ENCODE measurements at regions of chr14 and their contacts with region 1.

Region 1: DNA sequence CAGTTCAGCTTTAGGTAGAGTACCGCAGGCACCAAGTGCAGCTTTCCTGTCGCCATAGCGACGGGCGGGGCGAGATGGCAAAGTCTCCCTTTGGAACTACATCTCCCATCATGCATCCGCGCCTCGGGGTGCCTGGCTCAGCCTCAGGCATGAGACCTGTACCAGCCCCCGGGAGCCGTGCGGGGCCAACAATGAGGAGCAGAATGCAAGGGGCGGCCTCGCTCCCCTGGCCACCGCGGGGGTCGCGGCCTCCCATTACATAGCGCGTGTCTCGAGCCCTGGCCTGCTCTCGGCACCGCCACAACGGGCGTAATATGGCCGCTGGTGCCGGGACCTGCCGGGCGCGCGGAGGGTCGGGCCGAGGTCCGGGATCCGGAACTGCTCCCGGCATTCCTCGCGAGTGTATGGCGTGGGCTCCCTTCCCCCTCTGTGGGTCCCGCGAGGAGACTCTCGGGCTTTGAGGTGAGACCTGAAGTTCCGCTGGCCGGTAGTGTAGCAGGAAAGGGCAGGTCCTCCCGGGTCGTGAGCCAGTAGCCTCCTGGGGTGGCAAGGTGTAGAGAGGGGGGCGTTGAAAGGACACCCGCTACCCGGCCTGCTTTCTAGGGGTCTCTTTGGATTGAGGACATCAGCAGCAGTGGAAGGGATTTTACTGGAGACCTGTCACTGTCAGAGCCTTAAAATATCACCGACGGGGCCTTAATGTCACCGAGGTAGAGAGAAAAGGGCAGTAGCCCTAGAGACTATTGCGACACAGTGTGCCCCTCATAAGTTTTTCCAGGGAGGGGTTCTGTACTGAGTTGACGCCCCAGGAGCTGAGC is at the start of gene THTPA:
- DNase-seq: peak; percentile 88
- ATAC-seq: peak; percentile 79
- H3K4me3 Mint-ChIP-seq: peak within 1 kb of the TSS; percentile 94
- H3K27ac Mint-ChIP-seq: peak within 1 kb of the TSS; percentile 95
- H3K4me1 Mint-ChIP-seq: peaks cover 30% of the 10 kb centered on the region
- H3K27me3 Mint-ChIP-seq: no peaks in the 10 kb centered on the region
- CTCF ChIP-seq: no peak
- total RNA-seq, gene THTPA: 18.0 and 18.6 TPM in 2 replicates

Region 2: DNA sequence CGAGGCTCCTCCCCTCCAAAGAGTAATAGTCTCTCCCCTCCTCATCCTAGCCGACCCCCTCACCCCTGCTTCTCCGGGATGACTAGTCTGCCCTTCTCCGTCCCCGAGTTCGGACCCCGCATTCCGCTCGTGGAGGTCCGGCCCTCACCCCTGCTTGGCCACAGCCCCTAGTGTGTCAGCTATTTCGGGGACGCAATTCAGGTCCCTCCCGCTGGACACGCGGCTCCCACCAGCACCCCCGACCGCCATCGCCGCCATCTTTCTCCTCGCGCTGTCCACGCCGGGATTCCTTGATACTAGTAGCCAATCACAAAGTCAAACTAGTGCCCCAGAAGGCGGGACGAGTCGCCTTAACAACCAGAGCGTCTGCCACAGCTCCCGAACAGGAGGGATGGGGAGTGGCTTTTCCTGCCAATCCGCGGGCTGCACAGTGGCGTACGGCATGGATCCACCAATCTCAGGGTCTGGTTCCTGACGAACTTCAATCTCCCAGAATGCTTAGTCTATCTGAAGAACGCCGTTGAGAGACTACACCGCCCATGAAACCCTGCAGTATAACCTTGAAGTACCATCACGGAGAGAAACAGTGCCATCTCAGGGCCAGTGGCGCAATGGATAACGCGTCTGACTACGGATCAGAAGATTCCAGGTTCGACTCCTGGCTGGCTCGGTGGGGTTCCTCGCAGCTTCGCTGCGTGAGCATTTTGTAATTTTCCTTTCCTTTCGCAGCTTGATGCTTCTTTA is 626.8 kb before region 1 on chr14 and contains the start of gene PRMT5:
- CTCF ChIA-PET with region 1: no interaction called
- POLR2A ChIA-PET with region 1: no interaction called
- intact Hi-C with region 1: loop called (anchors 10 kb)
- DNase-seq: peak; percentile 83
- ATAC-seq: peak; percentile 93
- H3K4me3 Mint-ChIP-seq: no peak within 1 kb of the TSS
- H3K27ac Mint-ChIP-seq: no peak within 1 kb of the TSS
- H3K4me1 Mint-ChIP-seq: peaks cover 14% of the 10 kb centered on the region
- H3K27me3 Mint-ChIP-seq: no peaks in the 10 kb centered on the region
- CTCF ChIP-seq: no peak
- total RNA-seq, gene PRMT5: 75.3 and 96.5 TPM in 2 replicates

Region 3: DNA sequence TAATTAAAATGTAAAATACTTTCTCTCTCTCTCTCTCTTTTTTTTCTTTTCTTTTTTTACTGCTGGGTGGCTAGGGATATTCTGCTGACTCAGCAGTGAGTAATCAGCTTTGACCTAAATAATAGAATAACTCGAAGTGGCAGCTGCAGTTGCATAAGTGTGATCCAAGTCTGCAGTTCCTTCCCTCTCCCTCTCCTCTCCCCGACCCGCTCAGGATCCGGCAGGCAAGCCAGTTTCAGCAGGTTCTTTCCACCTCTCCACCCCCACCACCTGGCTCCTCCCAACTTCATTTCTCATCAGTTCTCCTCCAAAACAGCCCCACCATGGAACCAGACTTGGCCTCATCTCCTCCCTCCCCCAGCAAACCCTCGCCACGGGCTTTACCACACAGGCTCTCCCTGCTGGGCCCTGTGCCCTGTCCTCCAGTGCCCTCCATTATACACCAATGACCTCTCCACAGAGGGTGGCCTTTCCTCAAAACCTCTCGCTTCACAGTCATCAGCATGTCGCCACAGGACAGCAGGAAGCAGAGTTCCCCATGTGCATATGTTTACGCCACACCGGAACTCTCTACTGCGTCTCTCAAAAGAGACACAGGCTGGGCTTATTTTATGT is 395.1 kb before region 1 on chr14:
- CTCF ChIA-PET with region 1: no interaction called
- POLR2A ChIA-PET with region 1: no interaction called
- intact Hi-C with region 1: no loop called
- DNase-seq: no peak
- ATAC-seq: no peak
- H3K4me3 Mint-ChIP-seq: no peak overlapping the region
- H3K27ac Mint-ChIP-seq: no peak overlapping the region
- H3K4me1 Mint-ChIP-seq: no peaks in the 10 kb centered on the region
- H3K27me3 Mint-ChIP-seq: peaks cover 10% of the 10 kb centered on the region
- CTCF ChIP-seq: no peak

Region 4: DNA sequence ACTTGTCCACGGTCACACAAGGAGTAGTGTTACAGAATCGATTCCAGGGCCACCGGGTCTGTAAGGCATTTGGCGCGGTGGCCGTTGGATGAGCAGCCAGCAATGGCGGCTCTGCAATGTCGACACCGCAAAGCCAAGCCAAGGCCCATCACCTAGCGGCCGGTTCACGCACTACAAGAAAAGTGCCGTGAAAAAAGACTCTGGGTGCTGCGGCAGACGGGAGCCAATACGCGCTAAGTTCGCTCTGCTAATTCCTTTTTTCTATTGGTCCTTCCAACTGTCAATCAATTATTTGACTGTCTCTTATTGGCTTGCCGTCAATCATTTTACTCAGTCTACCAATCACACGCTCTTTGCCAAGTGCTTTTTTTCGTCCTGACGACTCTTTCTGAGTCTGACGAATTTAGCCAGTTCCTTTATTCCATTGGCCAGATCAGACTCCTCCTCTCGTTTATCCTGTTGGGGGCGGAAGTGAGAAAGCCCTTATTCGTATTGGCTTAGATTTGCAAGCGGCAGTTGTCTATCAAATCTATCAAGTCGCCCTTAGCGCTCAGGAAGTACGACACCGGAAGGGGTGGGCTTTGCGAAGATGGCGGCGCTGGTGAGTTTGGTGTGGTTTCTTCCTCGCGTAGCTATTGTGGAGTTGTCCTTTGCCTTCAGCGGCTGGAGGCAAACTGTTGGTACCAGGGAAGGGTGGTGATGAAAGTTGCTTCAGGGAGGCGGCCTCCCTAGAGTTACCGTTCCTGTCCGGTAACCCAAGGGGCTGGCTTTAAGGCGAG is 86.8 kb before region 1 on chr14 and contains the start of gene NGDN:
- CTCF ChIA-PET with region 1: interaction called, 128 read pairs
- POLR2A ChIA-PET with region 1: interaction called, 4 read pairs
- intact Hi-C with region 1: loop called (anchors 1 kb)
- DNase-seq: peak; percentile 80
- ATAC-seq: peak; percentile 90
- H3K4me3 Mint-ChIP-seq: no peak within 1 kb of the TSS
- H3K27ac Mint-ChIP-seq: no peak within 1 kb of the TSS
- H3K4me1 Mint-ChIP-seq: peaks cover 11% of the 10 kb centered on the region
- H3K27me3 Mint-ChIP-seq: no peaks in the 10 kb centered on the region
- CTCF ChIP-seq: no peak
- total RNA-seq, gene NGDN: 60.5 and 67.4 TPM in 2 replicates

Region 5: DNA sequence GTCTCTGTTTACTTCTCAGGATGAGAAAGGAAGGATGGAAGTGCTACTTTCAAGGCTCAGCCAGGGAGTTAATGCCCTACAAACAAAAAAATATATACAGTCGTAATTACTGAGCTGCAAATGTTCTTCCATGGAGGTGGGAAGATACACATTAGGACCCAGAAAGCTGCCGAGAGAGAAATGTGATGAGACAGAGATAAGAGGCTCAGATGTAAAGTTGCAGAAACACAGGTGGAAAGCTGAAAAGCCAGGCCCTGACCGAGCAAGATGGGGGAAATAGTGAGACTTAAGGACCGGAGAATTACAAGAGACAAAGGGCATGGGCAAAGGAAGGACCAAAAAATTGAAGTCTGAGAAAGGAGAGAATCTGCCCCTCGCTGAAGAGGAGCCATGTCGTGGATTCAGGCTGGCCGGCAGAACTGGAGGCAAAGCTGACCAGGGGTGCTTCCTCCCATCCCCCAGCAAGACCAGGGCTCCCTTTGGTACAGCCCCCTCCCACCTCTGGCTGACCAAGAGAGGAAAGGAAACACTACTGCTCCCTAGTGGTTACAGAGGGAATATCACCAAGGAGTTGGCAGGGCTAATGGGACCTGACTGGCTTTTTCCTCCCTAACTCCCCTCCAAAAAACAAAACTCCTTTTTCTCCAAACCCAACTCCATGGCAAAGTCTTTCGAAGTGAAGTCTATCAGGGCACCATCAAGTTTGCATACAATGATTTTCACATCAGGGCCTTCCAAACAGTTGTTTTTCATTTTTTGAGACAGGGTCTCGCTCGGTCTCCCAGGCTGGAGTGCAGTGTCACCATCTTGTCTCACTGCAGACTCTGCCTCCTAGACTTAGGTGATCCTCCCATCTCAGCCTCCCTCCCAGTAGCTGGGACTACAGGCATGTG is 16.6 kb before region 1 on chr14:
- CTCF ChIA-PET with region 1: interaction called, 3 read pairs
- POLR2A ChIA-PET with region 1: no interaction called
- intact Hi-C with region 1: loop called (anchors 1 kb)
- DNase-seq: no peak
- ATAC-seq: peak; percentile 76
- H3K4me3 Mint-ChIP-seq: no peak overlapping the region
- H3K27ac Mint-ChIP-seq: no peak overlapping the region
- H3K4me1 Mint-ChIP-seq: no peaks in the 10 kb centered on the region
- H3K27me3 Mint-ChIP-seq: peaks cover 2% of the 10 kb centered on the region
- CTCF ChIP-seq: peak; percentile 29

Region 6: DNA sequence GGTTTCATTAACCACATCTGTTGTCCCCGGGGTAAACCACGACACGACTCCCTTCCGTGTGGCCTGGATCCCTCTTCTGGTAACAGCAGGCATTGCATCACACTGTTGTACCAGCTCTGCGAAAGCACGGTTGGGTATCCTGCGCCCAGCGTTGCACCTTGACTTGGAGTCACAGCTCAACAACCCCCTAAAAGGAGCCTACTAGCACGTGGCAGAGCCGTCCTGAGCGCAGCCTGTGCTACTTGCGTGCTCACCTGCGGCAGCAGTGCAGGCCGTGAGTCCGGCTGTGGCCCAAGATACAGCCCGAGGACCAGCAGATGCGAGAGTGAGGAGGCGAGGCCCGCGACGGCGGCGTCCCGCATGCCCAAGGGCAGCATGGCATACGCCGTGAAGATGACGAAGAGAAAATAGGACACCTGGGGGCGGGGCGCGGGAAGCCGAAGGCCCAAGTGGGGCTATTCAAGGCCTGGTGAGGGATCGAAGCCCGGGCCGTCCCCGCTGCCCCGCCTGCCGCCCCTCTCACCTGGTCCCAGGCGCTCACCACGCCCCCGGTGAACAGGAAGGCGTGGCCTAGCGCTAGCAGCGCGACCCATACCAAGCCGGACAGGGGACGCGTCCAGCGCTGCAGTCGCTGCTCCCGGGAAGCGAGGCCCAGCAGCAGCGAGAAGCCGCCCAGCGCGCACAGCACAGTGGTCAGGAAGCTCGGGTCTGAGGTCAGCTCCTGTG is 776.3 kb after region 1 on chr14:
- CTCF ChIA-PET with region 1: no interaction called
- POLR2A ChIA-PET with region 1: no interaction called
- intact Hi-C with region 1: loop called (anchors 10 kb)
- DNase-seq: peak; percentile 63
- ATAC-seq: peak; percentile 95
- H3K4me3 Mint-ChIP-seq: peak overlapping the region; percentile 83
- H3K27ac Mint-ChIP-seq: peak overlapping the region; percentile 42
- H3K4me1 Mint-ChIP-seq: peaks cover 39% of the 10 kb centered on the region
- H3K27me3 Mint-ChIP-seq: peaks cover 14% of the 10 kb centered on the region
- CTCF ChIP-seq: no peak

Measured in activated B cell treated with CpG ODN at 0.5 μM for 24 hours (primary cell).